Activated CD4-positive, alpha-beta memory T cell treated with anti-CD3 and anti-CD28 coated beads, Interleukin-2, amount 10 ng/mL, durations not matched to agents 7 days and 5 days (primary cell): ENCODE measurements at regions of chr20 and their contacts with region 1.

Region 1: GRCh38 chr20:34111702-34112599 is at the start of gene EIF2S2:
- DNase-seq: peak; percentile 97
- H3K4me3 Mint-ChIP-seq: peak within 1 kb of the TSS; percentile 86
- H3K27ac Mint-ChIP-seq: peak within 1 kb of the TSS; percentile 92
- H3K4me1 Mint-ChIP-seq: peaks cover 39% of the 10 kb centered on the region
- H3K27me3 Mint-ChIP-seq: peaks cover 2% of the 10 kb centered on the region
- total RNA-seq, gene EIF2S2: 106 to 108 TPM

Region 2: GRCh38 chr20:33679758-33680485 is 432.0 kb before region 1 on chr20:
- CTCF ChIA-PET with region 1: no interaction called
- POLR2A ChIA-PET with region 1: interaction called, 12 read pairs
- DNase-seq: peak; percentile 78
- H3K4me3 Mint-ChIP-seq: no peak overlapping the region
- H3K27ac Mint-ChIP-seq: peak overlapping the region; percentile 90
- H3K4me1 Mint-ChIP-seq: peaks cover 81% of the 10 kb centered on the region
- H3K27me3 Mint-ChIP-seq: no peaks in the 10 kb centered on the region

Region 3: DNA sequence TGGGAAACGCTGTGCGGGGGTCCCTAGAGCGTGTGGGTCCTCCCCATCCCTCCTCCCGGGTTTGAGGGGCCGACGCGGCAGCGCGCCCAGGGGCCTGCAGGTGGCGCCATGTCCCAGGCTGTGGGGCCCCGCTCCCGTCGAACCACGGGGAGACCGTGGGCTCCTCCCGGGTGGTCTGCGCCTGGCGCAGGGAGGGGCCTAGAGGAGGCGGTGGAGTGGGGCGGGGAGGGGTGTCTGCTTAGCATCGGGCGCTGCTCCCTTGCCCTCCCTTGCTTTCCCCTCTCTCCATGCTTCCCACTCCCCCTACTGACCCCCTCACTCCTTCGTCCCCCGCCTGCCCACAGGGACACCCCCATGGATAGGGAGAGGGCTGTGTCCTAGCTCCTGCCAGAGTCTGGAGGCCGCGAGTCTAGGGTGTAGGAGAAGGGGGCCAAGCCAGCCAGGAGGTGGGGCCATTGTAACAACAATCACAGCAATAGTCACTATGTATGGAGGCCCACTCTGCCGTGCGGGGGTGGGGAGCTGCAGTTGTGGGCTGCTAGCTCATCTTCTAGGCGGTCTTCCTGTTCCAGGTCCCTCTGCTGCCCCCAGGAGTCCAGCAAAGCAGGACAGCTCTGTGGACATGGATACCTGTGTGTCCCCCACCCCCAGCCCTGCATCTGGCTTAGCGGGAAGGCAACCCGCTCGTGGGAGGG is 249.1 kb before region 1 on chr20:
- CTCF ChIA-PET with region 1: no interaction called
- POLR2A ChIA-PET with region 1: interaction called, 15 read pairs
- DNase-seq: peak; percentile 58
- H3K4me3 Mint-ChIP-seq: no peak overlapping the region
- H3K27ac Mint-ChIP-seq: no peak overlapping the region
- H3K4me1 Mint-ChIP-seq: peaks cover 28% of the 10 kb centered on the region
- H3K27me3 Mint-ChIP-seq: no peaks in the 10 kb centered on the region

Region 4: DNA sequence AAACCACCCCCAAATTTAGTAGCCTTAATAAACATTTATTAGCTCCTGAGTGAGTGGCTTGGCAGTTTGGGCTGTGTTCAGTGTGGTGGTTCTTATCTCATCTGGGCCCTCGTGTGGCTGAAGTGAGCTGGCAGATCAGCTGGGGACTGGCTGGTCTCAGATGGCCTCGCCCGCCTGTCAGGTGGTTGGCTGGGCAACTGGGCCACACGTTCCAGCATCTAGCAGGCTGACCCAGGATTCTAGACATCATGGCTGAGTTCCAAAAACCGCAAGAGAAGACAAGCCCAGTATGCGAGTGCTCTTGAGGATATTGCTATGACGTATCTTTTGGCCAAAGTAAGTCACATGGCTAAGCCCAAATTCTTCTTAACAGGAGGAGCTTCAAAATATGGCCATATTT is 28.8 kb before region 1 on chr20:
- CTCF ChIA-PET with region 1: no interaction called
- POLR2A ChIA-PET with region 1: interaction called, 11 read pairs
- DNase-seq: no peak
- H3K4me3 Mint-ChIP-seq: no peak overlapping the region
- H3K27ac Mint-ChIP-seq: no peak overlapping the region
- H3K4me1 Mint-ChIP-seq: peaks cover 3% of the 10 kb centered on the region
- H3K27me3 Mint-ChIP-seq: no peaks in the 10 kb centered on the region

Region 5: GRCh38 chr20:34122274-34122980 is 10.5 kb after region 1 on chr20:
- CTCF ChIA-PET with region 1: interaction called, 3 read pairs
- POLR2A ChIA-PET with region 1: interaction called, 14 read pairs
- DNase-seq: no peak
- H3K4me3 Mint-ChIP-seq: no peak overlapping the region
- H3K27ac Mint-ChIP-seq: no peak overlapping the region
- H3K4me1 Mint-ChIP-seq: peaks cover 14% of the 10 kb centered on the region
- H3K27me3 Mint-ChIP-seq: peaks cover 18% of the 10 kb centered on the region